ENCODE measurements at regions of chr12 and their contacts with region 1.

Region 1: DNA sequence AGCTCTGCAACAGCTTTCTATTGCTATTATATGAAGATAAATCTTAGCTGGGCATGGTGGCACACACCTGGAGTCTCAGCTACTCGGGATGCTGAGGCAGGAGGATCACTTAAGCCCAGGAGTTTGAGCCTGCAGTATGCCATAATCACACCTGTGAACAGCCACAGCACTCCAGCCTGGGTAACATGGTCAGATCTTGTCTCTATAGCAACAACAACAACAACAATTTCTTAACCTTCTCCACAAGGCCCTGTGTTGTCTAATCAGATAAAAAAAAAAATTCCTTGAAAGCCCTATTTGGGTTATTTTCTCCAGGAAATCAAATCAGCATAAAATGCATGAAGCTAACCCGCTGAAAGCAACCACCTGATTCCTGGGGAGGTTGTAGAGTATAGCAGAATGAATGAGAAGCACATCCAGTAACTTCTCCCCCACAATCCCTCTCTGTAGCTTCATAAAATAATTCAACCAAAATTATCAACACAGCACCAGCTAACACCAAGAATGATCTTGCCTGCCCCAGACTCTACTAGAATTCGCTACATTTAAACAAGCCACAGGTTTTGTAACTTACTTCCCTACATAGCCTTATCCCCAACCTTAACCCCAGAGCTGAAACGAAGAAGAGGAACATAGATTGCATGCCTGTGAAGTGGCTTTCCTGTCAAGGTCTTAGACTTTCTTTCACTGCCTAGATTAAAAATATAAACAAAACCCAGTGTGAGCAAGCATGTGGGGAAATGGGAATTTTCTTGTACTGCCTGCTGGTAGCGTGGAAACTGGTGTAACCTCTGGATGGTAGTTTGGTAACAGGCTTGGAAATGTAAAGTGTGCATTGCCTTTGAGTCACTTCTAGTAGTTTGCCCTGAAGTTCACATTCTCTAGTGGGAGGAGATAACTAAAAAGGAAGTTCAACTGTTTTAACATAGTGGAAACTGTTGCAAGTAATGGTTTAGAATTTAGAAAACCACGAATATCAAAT is 6.0 kb upstream of the STK38L start:
- DNase-seq: no peak
- H3K4me3 Mint-ChIP-seq: no peak overlapping the region
- H3K27ac Mint-ChIP-seq: peak overlapping the region; percentile 67
- H3K4me1 Mint-ChIP-seq: peaks cover 25% of the 10 kb centered on the region
- H3K27me3 Mint-ChIP-seq: peaks cover 1% of the 10 kb centered on the region

Region 2: GRCh38 chr12:27220057-27220987 is 17.8 kb before region 1 on chr12:
- CTCF ChIA-PET with region 1: no interaction called
- POLR2A ChIA-PET with region 1: no interaction called
- intact Hi-C with region 1: loop called (anchors 2 kb)
- DNase-seq: peak; percentile 55
- H3K4me3 Mint-ChIP-seq: no peak overlapping the region
- H3K27ac Mint-ChIP-seq: peak overlapping the region; percentile 62
- H3K4me1 Mint-ChIP-seq: peaks cover 23% of the 10 kb centered on the region
- H3K27me3 Mint-ChIP-seq: peaks cover 2% of the 10 kb centered on the region

Measured in activated CD4-positive, alpha-beta memory T cell treated with anti-CD3 and anti-CD28 coated beads for 36 hours (primary cell).